PC-9 (cell line): ENCODE measurements at regions of chr3 and their contacts with region 1.

Region 1: GRCh38 chr3:94249585-94249984 is 186.7 kb downstream of the NSUN3 start:
- DNase-seq: peak; percentile 39 to 63
- H3K4me3 ChIP-seq: no peak overlapping the region
- H3K27ac ChIP-seq: no peak overlapping the region
- H3K4me1 ChIP-seq: no peaks in the 10 kb centered on the region
- H3K27me3 ChIP-seq: 0 out of 2 replicates have a peak, but pooled peaks cover 4% of the 10 kb centered on the region
- CTCF ChIP-seq: peak; percentile 98

Region 2: DNA sequence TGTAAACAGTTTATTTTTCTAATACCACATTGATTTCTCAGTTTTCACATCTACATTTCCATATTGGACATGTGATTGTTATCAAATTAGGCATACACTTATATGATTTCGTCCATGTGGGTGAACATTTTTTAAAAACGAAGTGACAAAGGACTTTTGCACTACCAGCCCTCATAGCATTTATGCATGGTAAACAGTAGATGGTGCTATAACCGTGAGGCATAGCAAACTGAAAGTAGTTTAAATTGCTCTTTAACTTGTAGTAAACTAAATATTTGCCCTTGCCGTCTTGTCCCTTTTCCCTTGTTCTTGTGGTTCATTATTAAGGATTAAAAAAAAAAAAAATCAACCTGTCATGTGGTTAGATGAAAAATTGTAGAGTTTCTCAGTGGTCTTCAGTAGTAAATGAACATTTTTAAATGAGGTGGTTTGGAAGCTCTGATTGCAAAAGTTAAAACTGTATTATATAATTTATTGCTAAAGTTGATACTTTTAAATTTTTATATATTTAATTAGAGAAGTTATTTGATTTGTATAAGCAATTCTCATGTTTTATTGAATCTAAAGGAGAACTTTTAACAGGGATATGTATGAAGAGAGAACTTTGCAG is 245.2 kb before region 1 on chr3:
- CTCF ChIA-PET with region 1: no interaction called
- POLR2A ChIA-PET with region 1: no interaction called
- intact Hi-C with region 1: loop called (anchors 10 kb)
- DNase-seq: peak in 1 of 2 experiments; percentile 74
- H3K4me3 ChIP-seq: peak overlapping the region; percentile 30; the same call in 1 of the 2 replicates
- H3K27ac ChIP-seq: no peak overlapping the region
- H3K4me1 ChIP-seq: peaks cover 8% of the 10 kb centered on the region; the same call in 1 of the 2 replicates
- H3K27me3 ChIP-seq: no peaks in the 10 kb centered on the region
- CTCF ChIP-seq: peak; percentile 96

Region 3: GRCh38 chr3:94716326-94717010 is 466.9 kb after region 1 on chr3:
- CTCF ChIA-PET with region 1: interaction called, 15 read pairs
- POLR2A ChIA-PET with region 1: no interaction called
- intact Hi-C with region 1: no loop called
- DNase-seq: no peak
- H3K4me3 ChIP-seq: no peak overlapping the region
- H3K27ac ChIP-seq: no peak overlapping the region
- H3K4me1 ChIP-seq: no peaks in the 10 kb centered on the region
- H3K27me3 ChIP-seq: no peaks in the 10 kb centered on the region
- CTCF ChIP-seq: peak; percentile 40; the same call in 1 of the 2 replicates